ENCODE measurements at regions of chr2 and their contacts with region 1.

Region 1: DNA sequence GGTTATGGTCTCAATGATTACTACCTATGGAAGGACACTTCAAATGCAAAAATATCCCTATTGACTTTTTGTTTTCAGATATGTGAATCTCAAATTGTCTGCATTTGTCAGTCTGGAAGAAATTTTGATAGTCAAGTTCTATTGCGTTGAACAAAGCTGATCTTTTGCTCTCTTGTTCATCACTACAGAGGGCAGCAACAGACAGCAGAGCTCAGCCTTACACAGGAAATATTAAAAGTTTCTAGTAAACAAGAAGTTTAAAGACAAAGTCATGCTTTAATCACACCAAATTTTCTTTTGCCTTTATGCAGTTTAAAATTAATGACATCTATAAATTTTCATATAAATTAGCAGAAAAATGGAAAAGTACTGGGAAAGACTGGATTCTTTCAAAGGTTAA is 617.5 kb downstream of the NR4A2 start:
- DNase-seq: no peak
- H3K4me3 ChIP-seq: no peak overlapping the region
- H3K27ac ChIP-seq: no peak overlapping the region
- H3K4me1 ChIP-seq: no peaks in the 10 kb centered on the region
- H3K27me3 ChIP-seq: no peaks in the 10 kb centered on the region
- CTCF ChIP-seq: no peak
- POLR2A ChIP-seq: no peak

Region 2: DNA sequence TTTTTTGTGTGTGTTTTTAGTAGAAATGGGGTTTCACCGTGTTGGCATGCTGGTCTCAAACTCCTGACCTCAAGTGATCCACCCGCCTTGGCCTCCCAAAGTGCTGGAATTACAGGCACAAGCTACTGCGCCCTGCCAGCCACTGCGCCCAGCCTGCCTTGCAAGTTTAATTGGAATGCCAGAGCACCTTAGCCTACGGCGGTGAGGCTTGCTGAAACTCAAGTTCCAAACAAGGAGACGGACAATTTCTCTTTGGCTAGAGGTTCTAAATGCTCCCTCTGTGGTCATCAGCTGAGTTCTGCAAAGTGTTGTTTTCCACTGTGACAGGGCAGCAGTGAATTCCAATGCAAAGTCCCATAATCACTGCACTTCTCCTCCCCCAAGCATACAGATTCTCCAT is 433.1 kb before region 1 on chr2:
- CTCF ChIA-PET with region 1: no interaction called
- POLR2A ChIA-PET with region 1: no interaction called
- dilution Hi-C with region 1: no loop called
- intact Hi-C with region 1: no loop called
- DNase-seq: no peak
- H3K4me3 ChIP-seq: no peak overlapping the region
- H3K27ac ChIP-seq: no peak overlapping the region
- H3K4me1 ChIP-seq: no peaks in the 10 kb centered on the region
- H3K27me3 ChIP-seq: no peaks in the 10 kb centered on the region
- CTCF ChIP-seq: no peak
- POLR2A ChIP-seq: no peak

Region 3: DNA sequence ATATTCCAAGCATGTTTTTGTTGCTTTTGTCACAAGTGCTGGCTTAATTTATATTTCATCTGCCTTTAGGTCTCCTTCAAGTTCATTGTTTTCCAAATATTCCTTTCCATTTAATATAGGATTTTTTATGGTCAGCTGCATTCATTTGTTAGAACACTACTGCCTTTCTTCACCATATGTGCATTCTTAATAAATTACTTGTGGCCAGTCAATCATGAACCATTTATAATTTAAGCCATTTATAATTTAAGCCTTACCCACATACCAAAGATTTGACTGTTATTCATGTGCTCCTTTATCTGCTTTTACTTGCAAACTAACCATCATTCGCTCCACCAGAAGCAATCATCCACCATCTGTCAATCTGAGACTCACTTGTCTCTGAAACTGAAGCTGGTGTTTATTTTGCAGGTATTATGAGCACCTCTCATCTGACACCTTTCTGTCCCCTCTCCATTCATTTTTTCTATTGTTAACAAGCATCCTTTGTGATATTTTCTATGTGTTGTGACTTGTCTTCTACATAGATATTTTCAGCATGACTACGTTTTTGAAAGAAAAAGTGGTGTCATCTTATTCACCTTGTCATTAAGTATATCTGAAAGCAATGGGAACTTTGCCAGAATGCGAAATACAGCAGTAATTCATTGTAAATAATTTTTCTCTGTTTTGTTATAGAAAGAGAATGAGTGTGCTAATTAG is 229.7 kb before region 1 on chr2:
- CTCF ChIA-PET with region 1: no interaction called
- POLR2A ChIA-PET with region 1: no interaction called
- dilution Hi-C with region 1: no loop called
- intact Hi-C with region 1: no loop called
- DNase-seq: no peak
- H3K4me3 ChIP-seq: no peak overlapping the region
- H3K27ac ChIP-seq: no peak overlapping the region
- H3K4me1 ChIP-seq: no peaks in the 10 kb centered on the region
- H3K27me3 ChIP-seq: no peaks in the 10 kb centered on the region
- CTCF ChIP-seq: no peak
- POLR2A ChIP-seq: no peak

Region 4: GRCh38 chr2:156115338-156115737 is 400.4 kb after region 1 on chr2:
- CTCF ChIA-PET with region 1: no interaction called
- POLR2A ChIA-PET with region 1: no interaction called
- dilution Hi-C with region 1: no loop called
- intact Hi-C with region 1: no loop called
- DNase-seq: no peak
- H3K4me3 ChIP-seq: no peak overlapping the region
- H3K27ac ChIP-seq: no peak overlapping the region
- H3K4me1 ChIP-seq: no peaks in the 10 kb centered on the region
- H3K27me3 ChIP-seq: no peaks in the 10 kb centered on the region
- CTCF ChIP-seq: no peak
- POLR2A ChIP-seq: no peak

Region 5: GRCh38 chr2:156319811-156320485 is 605.0 kb after region 1 on chr2:
- CTCF ChIA-PET with region 1: no interaction called
- POLR2A ChIA-PET with region 1: interaction called, 10 read pairs
- dilution Hi-C with region 1: no loop called
- intact Hi-C with region 1: no loop called
- DNase-seq: no peak
- H3K4me3 ChIP-seq: peak overlapping the region in 1 of 3 experiments; percentile 18
- H3K27ac ChIP-seq: no peak overlapping the region
- H3K4me1 ChIP-seq: peaks cover 12% of the 10 kb centered on the region
- H3K27me3 ChIP-seq: peaks cover 40 to 59% of the 10 kb centered on the region in 2 experiments
- CTCF ChIP-seq: no peak
- POLR2A ChIP-seq: no peak